ENCODE measurements at regions of chr9 and their contacts with region 1.

Region 1: DNA sequence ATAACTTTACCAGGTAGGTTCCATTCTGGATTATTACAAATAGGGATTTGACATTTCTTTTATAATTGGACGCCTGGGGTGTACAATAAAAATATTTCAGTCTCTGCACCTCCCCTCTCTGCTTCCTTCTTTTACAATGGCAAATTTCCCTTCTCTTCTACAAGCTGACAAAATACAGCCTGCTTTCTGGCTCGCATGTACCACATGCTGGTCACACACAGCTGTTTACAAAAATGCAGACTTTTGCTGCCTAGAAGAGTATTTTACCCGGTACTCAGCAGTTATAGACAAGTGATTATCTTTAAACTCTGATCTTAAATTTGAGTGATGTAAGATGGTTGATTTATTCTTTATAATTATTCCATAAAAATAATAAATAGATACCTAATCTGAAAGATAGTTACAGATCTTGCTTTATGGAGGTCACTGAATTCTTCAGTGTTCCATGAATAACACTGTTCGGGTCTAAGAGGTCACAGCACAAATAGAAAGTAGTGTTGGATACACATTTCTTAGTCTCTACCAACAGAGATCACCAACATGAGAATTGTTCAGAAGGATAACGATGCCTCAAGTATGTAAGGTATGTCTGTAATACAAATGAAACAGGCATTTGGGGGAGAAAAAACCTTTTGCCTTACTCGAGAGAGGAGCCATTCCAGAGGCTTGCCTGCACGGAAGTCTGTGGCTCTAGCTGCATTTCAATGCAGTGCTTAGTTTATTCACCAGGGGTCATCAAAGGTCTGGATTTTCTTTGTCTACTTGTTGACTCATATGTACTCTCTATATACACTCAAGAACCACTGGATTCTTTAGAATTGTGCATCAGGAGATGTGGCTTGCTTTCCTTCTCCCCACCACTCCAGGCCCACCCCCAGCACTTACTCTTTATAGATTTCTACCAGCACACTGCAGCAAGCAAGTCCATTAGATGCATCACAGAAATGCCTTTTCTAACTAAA is 206.6 kb upstream of the RFX3 start:
- DNase-seq: peak; percentile 84
- H3K4me3 Mint-ChIP-seq: no peak overlapping the region
- H3K27ac Mint-ChIP-seq: no peak overlapping the region
- H3K4me1 Mint-ChIP-seq: peaks cover 10% of the 10 kb centered on the region
- H3K27me3 Mint-ChIP-seq: no peaks in the 10 kb centered on the region
- CTCF ChIP-seq: peak; percentile 64

Region 2: DNA sequence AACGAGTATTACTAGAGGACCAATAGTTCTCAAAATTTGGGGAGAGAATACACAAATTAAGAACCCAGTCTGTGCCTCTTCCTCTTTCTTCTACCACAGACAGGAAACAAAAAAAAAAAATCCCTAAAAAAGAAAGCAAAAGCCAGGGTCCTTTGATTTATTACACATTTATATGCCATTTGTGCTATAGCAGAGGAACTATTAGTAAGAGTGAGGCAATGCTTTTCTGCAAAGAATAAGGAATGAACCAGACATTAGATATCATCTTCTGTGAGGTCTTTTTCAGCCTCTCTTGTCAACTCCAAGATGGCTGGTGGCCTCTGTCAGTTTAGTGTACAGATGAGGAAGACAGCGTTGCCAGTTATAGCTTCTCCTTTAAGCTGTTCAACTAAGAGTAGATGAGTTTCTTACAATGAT is 334.1 kb before region 1 on chr9:
- CTCF ChIA-PET with region 1: no interaction called
- POLR2A ChIA-PET with region 1: no interaction called
- intact Hi-C with region 1: no loop called
- DNase-seq: no peak
- H3K4me3 Mint-ChIP-seq: no peak overlapping the region
- H3K27ac Mint-ChIP-seq: no peak overlapping the region
- H3K4me1 Mint-ChIP-seq: no peaks in the 10 kb centered on the region
- H3K27me3 Mint-ChIP-seq: no peaks in the 10 kb centered on the region
- CTCF ChIP-seq: no peak

Region 3: GRCh38 chr9:4077499-4078102 is 345.2 kb after region 1 on chr9:
- CTCF ChIA-PET with region 1: interaction called, 17 read pairs
- POLR2A ChIA-PET with region 1: no interaction called
- intact Hi-C with region 1: loop called (anchors 1 kb)
- DNase-seq: peak; percentile 86
- H3K4me3 Mint-ChIP-seq: no peak overlapping the region
- H3K27ac Mint-ChIP-seq: no peak overlapping the region
- H3K4me1 Mint-ChIP-seq: peaks cover 7% of the 10 kb centered on the region
- H3K27me3 Mint-ChIP-seq: no peaks in the 10 kb centered on the region
- CTCF ChIP-seq: peak; percentile 79

Region 4: DNA sequence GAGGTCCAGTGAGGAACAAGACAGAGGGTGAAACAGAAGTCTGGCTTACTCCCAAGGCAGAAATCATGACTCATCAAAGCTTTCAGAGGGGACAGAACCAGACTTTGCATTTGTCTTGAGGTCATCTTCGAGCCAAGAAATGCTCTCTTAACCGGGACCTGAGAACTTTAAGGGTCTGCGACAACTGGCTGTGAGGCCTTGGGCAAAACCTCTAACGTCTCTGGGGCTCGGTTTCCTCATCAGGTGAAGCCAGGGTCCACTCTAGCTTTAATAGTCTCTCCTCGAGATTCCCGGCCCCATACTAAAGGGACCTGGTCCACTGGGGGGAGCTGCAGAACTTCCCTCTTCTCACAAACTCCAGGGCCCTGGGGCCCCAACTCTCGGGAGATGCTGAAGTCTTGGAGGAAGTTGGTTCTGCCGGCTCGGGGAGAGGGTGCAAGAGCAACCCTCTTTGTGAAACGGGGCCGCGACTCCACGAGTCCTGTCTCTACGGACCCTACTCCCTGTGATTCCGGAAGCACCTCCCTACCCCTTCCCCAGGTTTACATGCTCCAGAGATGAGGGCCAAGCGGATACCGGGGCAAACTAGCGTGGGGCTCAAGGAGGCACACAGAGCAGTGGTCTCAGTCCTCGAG is 564.9 kb after region 1 on chr9:
- CTCF ChIA-PET with region 1: no interaction called
- POLR2A ChIA-PET with region 1: no interaction called
- intact Hi-C with region 1: loop called (anchors 2 kb)
- DNase-seq: peak; percentile 91
- H3K4me3 Mint-ChIP-seq: peak overlapping the region; percentile 94
- H3K27ac Mint-ChIP-seq: peak overlapping the region; percentile 97
- H3K4me1 Mint-ChIP-seq: peaks cover 37% of the 10 kb centered on the region
- H3K27me3 Mint-ChIP-seq: no peaks in the 10 kb centered on the region
- CTCF ChIP-seq: peak; percentile 39

Region 5: DNA sequence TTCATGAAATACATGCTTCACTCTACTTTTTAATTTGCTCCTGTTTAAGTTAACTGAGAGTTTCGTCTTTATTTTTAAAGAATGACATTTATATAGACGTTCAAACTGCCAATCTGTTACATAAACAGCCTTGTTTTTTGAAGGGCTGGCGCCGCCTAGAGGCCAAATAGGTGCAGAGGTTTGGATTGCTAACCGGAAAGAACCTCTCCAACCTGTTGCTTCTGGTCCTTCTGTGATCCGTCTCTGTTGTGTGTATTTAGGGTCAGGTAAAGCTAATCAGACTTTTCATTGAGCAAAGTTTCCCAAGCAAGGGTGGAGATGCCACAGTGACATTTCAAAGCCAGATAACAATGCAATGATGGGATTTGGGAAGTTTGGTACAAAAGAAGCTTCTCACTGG is 607.0 kb after region 1 on chr9:
- CTCF ChIA-PET with region 1: interaction called, 40 read pairs
- POLR2A ChIA-PET with region 1: interaction called, 7 read pairs
- intact Hi-C with region 1: loop called (anchors 1 kb)
- DNase-seq: peak; percentile 90
- H3K4me3 Mint-ChIP-seq: no peak overlapping the region
- H3K27ac Mint-ChIP-seq: no peak overlapping the region
- H3K4me1 Mint-ChIP-seq: peaks cover 10% of the 10 kb centered on the region
- H3K27me3 Mint-ChIP-seq: no peaks in the 10 kb centered on the region
- CTCF ChIP-seq: peak; percentile 92

Region 6: DNA sequence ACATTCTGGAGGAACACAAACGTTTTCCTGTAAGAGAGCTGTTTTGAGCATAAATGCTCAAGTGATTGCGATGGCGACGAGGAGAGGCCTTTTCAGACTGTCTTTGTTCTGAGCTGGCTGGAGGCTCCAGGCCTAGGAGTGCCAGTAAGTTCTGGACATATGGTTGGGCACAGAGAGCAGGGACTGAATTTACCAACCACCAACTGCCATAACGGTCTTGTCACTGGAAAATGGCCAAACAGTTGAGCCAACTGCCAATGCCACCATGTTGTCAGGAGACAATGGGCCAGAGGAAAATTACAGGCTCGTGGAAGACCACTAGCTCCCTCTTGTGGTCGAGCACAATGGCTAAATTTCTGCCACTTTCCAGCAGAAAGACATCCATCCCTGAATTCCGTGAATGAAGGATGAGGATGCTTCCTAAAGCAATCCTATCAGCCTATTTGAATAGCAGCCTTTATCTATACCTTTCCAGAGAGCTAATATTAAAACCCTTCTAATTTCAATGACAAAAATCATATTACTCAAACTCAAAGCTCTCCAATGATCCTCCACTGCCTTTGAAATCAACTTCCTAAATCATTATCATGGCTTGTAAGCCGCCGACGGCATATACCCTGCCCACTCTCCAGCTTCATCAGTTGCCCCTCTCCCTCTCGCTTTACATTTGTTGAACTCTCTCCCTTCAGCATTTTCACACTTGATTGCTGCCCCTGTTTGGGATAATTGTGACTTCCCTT is 634.4 kb after region 1 on chr9:
- CTCF ChIA-PET with region 1: interaction called, 23 read pairs
- POLR2A ChIA-PET with region 1: no interaction called
- intact Hi-C with region 1: loop called (anchors 1 kb)
- DNase-seq: peak; percentile 52
- H3K4me3 Mint-ChIP-seq: no peak overlapping the region
- H3K27ac Mint-ChIP-seq: no peak overlapping the region
- H3K4me1 Mint-ChIP-seq: no peaks in the 10 kb centered on the region
- H3K27me3 Mint-ChIP-seq: peaks cover 3% of the 10 kb centered on the region
- CTCF ChIP-seq: peak; percentile 80

Measured in MCF 10A (cell line).